PC-3 (cell line): ENCODE measurements at regions of chr10 and their contacts with region 1.

Region 1: GRCh38 chr10:112471878-112472487 is 25.0 kb downstream of the VTI1A start:
- DNase-seq: peak; percentile 48
- ATAC-seq: peak; percentile 57
- H3K4me3 ChIP-seq: no peak overlapping the region
- H3K27ac ChIP-seq: no peak overlapping the region
- H3K4me1 ChIP-seq: 0 out of 2 replicates have a peak, but pooled peaks cover 7% of the 10 kb centered on the region
- H3K27me3 ChIP-seq: no peaks in the 10 kb centered on the region
- CTCF ChIP-seq: peak; percentile 80

Region 2: GRCh38 chr10:112456533-112456932 is 15.4 kb before region 1 on chr10:
- CTCF ChIA-PET with region 1: no interaction called
- POLR2A ChIA-PET with region 1: no interaction called
- intact Hi-C with region 1: no loop called
- DNase-seq: no peak
- ATAC-seq: no peak
- H3K4me3 ChIP-seq: no peak overlapping the region
- H3K27ac ChIP-seq: no peak overlapping the region
- H3K4me1 ChIP-seq: no peaks in the 10 kb centered on the region
- H3K27me3 ChIP-seq: no peaks in the 10 kb centered on the region
- CTCF ChIP-seq: 0 out of 2 replicates have a peak, but pooled peaks have one; percentile 10

Region 3: DNA sequence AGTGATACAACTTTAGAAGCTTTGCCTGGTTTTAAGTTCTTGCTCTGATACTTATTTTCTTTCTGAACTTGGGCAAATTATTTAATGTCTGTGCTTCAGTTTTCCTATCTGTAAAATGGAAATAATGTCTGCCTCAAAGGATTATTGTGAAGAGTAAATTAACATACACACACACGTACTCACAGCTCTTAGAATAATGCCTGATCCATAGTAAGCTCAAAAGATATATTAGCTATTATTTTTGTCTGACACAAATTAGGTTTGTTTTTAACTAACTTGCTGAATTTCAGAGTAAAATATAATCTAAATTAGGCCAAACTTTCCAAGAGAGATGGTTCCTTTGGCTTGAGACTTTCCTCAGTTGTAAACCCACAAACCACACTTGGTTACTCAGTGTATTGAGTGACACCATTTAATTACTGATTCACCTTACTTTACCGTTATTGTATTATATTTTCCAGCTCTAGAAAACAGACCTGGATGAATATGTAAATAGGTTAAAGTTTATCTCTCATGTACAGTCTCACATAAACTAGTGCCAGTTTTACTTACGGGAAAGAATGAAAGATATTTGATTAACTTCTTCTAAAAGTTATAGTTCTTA is 25.5 kb after region 1 on chr10:
- CTCF ChIA-PET with region 1: no interaction called
- POLR2A ChIA-PET with region 1: no interaction called
- intact Hi-C with region 1: no loop called
- DNase-seq: no peak
- ATAC-seq: no peak
- H3K4me3 ChIP-seq: no peak overlapping the region
- H3K27ac ChIP-seq: no peak overlapping the region
- H3K4me1 ChIP-seq: no peaks in the 10 kb centered on the region
- H3K27me3 ChIP-seq: no peaks in the 10 kb centered on the region
- CTCF ChIP-seq: no peak

Region 4: GRCh38 chr10:112701211-112701877 is 229.4 kb after region 1 on chr10:
- CTCF ChIA-PET with region 1: no interaction called
- POLR2A ChIA-PET with region 1: no interaction called
- intact Hi-C with region 1: no loop called
- DNase-seq: no peak
- ATAC-seq: no peak
- H3K4me3 ChIP-seq: no peak overlapping the region
- H3K27ac ChIP-seq: no peak overlapping the region
- H3K4me1 ChIP-seq: no peaks in the 10 kb centered on the region
- H3K27me3 ChIP-seq: no peaks in the 10 kb centered on the region
- CTCF ChIP-seq: no peak

Region 5: GRCh38 chr10:113126229-113127201 is 654.5 kb after region 1 on chr10:
- CTCF ChIA-PET with region 1: no interaction called
- POLR2A ChIA-PET with region 1: no interaction called
- intact Hi-C with region 1: loop called (anchors 5 kb)
- DNase-seq: peak; percentile 73
- ATAC-seq: peak; percentile 99
- H3K4me3 ChIP-seq: peak overlapping the region; percentile 63
- H3K27ac ChIP-seq: no peak overlapping the region
- H3K4me1 ChIP-seq: peaks cover 13% of the 10 kb centered on the region
- H3K27me3 ChIP-seq: no peaks in the 10 kb centered on the region
- CTCF ChIP-seq: peak; percentile 61